ENCODE measurements at regions of chr12 and their contacts with region 1.

Region 1: GRCh38 chr12:1795785-1796514 is 24.4 kb upstream of the LRTM2 start:
- DNase-seq: peak; percentile 77
- H3K4me3 ChIP-seq: peak overlapping the region; percentile 9 to 39 (median 36)
- H3K27ac ChIP-seq: no peak overlapping the region
- H3K4me1 ChIP-seq: peaks cover 14% of the 10 kb centered on the region
- H3K27me3 ChIP-seq: no peaks in the 10 kb centered on the region
- CTCF ChIP-seq: peak; percentile 64 to 78

Region 2: GRCh38 chr12:1634590-1635191 is 161.3 kb before region 1 on chr12:
- CTCF ChIA-PET with region 1: interaction called, 8 read pairs
- dilution Hi-C with region 1: no loop called
- in situ Hi-C with region 1: no loop called
- intact Hi-C with region 1: loop called (anchors 1 kb)
- DNase-seq: peak; percentile 43
- H3K4me3 ChIP-seq: no peak overlapping the region
- H3K27ac ChIP-seq: no peak overlapping the region
- H3K4me1 ChIP-seq: peaks cover 9% of the 10 kb centered on the region
- H3K27me3 ChIP-seq: peaks cover 2% of the 10 kb centered on the region
- CTCF ChIP-seq: peak; percentile 95 to 97

Region 3: GRCh38 chr12:1650260-1650977 is 145.5 kb before region 1 on chr12:
- CTCF ChIA-PET with region 1: interaction called, 29 read pairs
- dilution Hi-C with region 1: loop called (anchors 25 kb)
- in situ Hi-C with region 1: loop called in 1 of 2 experiments (anchors 5 kb)
- intact Hi-C with region 1: loop called (anchors 1 kb)
- DNase-seq: no peak
- H3K4me3 ChIP-seq: no peak overlapping the region
- H3K27ac ChIP-seq: no peak overlapping the region
- H3K4me1 ChIP-seq: no peaks in the 10 kb centered on the region
- H3K27me3 ChIP-seq: no peaks in the 10 kb centered on the region
- CTCF ChIP-seq: no peak

Region 4: GRCh38 chr12:1690578-1691122 is 105.3 kb before region 1 on chr12 and contains the start of gene ADIPOR2:
- CTCF ChIA-PET with region 1: interaction called, 3 read pairs
- dilution Hi-C with region 1: no loop called
- in situ Hi-C with region 1: no loop called
- intact Hi-C with region 1: loop called (anchors 2 kb)
- DNase-seq: peak; percentile 96
- H3K4me3 ChIP-seq: peak within 1 kb of the TSS; percentile 92 to 98 (median 93)
- H3K27ac ChIP-seq: peak within 1 kb of the TSS; percentile 93
- H3K4me1 ChIP-seq: peaks cover 8% of the 10 kb centered on the region
- H3K27me3 ChIP-seq: no peaks in the 10 kb centered on the region
- CTCF ChIP-seq: no peak
- total RNA-seq, gene ADIPOR2: 46.7 to 73.0 TPM

Region 5: DNA sequence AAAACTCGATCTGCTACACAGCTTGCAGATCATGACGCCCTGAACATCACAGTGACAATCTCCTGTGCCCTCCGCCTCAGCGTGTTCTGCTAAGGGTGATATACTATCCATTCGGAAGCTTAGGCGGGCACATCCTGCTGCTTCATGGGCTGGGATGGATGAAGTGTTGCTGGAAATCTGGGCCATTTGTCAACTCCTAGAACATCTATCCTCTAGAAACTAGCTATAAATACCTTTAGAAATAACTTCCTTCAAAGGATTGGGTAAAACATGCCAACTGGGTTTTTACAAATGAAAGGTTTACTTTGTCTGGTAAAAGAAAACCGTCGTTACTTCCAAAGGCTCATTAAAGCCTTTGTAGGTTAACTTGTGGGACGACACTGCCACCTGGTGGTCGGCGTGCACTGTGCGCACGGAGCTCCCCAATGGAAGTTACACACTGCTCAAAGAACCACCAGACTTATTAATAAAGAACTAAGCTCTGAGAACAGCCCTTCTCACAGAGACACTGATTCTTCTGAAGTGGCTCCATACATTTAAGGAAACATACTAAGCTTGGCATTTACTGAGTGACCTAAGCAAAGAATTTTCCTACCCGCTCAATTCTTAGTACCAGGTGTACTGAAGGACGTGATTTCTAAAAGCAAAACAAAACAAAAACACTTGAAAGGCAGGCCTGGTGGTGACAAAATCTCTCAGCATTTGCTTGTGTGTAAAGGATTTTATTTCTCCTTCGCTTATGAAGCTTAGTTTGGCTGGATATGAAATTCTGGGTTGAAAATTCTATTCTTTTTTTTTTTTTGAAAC is 144.1 kb after region 1 on chr12:
- CTCF ChIA-PET with region 1: no interaction called
- dilution Hi-C with region 1: no loop called
- in situ Hi-C with region 1: loop called (anchors 5 to 10 kb)
- intact Hi-C with region 1: loop called (anchors 1 kb)
- DNase-seq: peak; percentile 57
- H3K4me3 ChIP-seq: no peak overlapping the region
- H3K27ac ChIP-seq: no peak overlapping the region
- H3K4me1 ChIP-seq: no peaks in the 10 kb centered on the region
- H3K27me3 ChIP-seq: no peaks in the 10 kb centered on the region
- CTCF ChIP-seq: peak; percentile 90 to 95

Region 6: DNA sequence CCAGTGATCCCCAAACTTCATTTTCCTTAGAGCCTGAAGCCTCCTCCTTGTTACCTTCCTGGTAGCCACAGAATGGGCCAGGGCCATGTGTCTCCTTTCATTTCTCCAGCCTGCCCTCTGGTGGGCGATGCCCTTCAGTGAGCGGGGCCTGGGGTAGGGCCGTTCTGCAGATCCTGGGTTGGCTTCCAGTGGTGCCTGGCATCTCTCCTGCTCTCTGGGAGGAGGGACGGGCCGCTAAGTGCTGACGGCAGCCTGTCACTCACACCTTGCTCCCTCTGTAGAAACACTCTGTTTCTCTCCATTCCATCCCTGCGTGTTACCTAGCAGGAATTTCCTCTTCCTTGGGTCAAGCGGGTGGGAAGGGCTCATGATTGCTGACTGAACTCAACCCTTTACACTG is 488.9 kb after region 1 on chr12:
- CTCF ChIA-PET with region 1: no interaction called
- dilution Hi-C with region 1: no loop called
- in situ Hi-C with region 1: no loop called
- intact Hi-C with region 1: loop called (anchors 2 kb)
- DNase-seq: peak; percentile 58
- H3K4me3 ChIP-seq: no peak overlapping the region
- H3K27ac ChIP-seq: no peak overlapping the region
- H3K4me1 ChIP-seq: peaks cover 9% of the 10 kb centered on the region
- H3K27me3 ChIP-seq: peaks cover 2% of the 10 kb centered on the region
- CTCF ChIP-seq: peak; percentile 75 to 81

Measured in mammary epithelial cell (primary cell).